ENCODE measurements at regions of chr11 and their contacts with region 1.

Region 1: DNA sequence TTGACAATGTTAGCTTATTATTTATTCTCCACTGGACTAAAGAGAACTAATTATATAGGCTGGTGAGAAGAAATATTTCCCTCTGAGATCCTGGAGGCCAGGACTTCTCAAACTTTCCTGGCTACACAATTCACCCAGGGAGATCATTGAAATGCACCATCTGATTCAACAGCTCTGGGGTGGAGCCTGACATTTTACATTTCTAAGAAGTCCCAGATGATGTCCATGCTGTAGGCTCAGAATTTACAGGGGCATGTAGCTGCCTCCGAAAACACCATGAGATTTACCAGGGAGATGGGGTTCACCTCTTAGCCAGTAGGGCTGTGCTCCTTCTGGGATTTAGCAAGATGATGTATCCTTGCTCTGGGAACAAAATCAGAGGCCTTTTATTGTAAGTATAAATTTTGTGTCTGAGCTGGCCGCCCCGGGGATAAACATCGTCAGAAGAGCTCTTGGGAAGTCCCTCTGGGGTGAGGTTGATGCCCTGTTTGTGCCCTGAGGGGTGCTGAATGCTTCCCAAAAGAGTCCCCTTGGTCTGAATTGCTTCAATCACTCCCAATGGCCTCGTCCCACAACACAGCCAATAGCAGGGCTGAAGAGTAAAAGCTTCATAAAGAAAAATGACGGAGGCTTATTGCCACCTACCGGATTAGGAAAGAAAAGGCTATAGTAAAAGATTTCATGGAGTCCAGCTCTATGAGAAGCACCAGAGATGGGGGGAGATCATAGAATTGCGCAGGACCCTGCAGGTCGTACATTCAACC is 33.4 kb upstream of the API5 start:
- DNase-seq: no peak
- ATAC-seq: no peak
- H3K4me3 ChIP-seq: no peak overlapping the region
- H3K27ac ChIP-seq: no peak overlapping the region
- H3K4me1 ChIP-seq: no peaks in the 10 kb centered on the region
- H3K27me3 ChIP-seq: no peaks in the 10 kb centered on the region
- CTCF ChIP-seq: no peak

Region 2: GRCh38 chr11:42770444-42771065 is 507.8 kb before region 1 on chr11:
- intact Hi-C with region 1: loop called (anchors 10 kb)
- DNase-seq: no peak
- ATAC-seq: no peak
- H3K4me3 ChIP-seq: no peak overlapping the region
- H3K27ac ChIP-seq: no peak overlapping the region
- H3K4me1 ChIP-seq: no peaks in the 10 kb centered on the region
- H3K27me3 ChIP-seq: no peaks in the 10 kb centered on the region
- CTCF ChIP-seq: peak; percentile 53